Endothelial cell of umbilical vein (primary cell): ENCODE measurements at regions of chr7 and their contacts with region 1.

Region 1: GRCh38 chr7:132145466-132145865 is 430.8 kb downstream of the PLXNA4 start:
- DNase-seq: peak; percentile 88
- H3K4me3 ChIP-seq: no peak overlapping the region
- H3K27ac ChIP-seq: peak overlapping the region; percentile 49
- H3K4me1 ChIP-seq: peaks cover 8% of the 10 kb centered on the region
- H3K27me3 ChIP-seq: no peaks in the 10 kb centered on the region
- CTCF ChIP-seq: peak in 1 of 2 donors; percentile 18
- POLR2A ChIP-seq: no peak

Region 2: GRCh38 chr7:131212114-131212513 is 933.4 kb before region 1 on chr7:
- CTCF ChIA-PET with region 1: no interaction called
- POLR2A ChIA-PET with region 1: no interaction called
- dilution Hi-C with region 1: no loop called
- intact Hi-C with region 1: no loop called
- DNase-seq: peak; percentile 29
- H3K4me3 ChIP-seq: no peak overlapping the region
- H3K27ac ChIP-seq: no peak overlapping the region
- H3K4me1 ChIP-seq: no peaks in the 10 kb centered on the region
- H3K27me3 ChIP-seq: peaks cover 0 to 1% of the 10 kb centered on the region in 2 experiments
- CTCF ChIP-seq: no peak
- POLR2A ChIP-seq: no peak

Region 3: DNA sequence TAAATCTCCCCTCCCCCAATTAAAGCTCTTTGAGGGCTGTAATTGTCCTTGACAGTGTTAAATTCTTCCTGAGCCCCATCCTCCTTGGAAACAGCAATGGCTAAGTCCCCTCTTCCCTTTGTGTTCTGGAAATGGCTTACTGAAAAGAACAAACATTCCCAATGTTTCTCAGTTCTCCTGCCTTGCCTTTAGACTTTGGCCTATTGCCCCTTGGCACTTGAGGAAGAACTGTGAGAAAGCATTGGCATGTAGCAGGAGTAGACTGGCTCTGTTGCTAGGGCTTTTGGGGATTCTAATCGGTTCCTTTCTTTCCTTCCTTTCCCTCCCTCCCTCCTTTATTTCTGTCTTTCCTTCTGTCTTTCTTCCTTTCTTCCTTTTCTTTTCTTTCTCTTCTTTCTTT is 125.8 kb before region 1 on chr7:
- CTCF ChIA-PET with region 1: no interaction called
- POLR2A ChIA-PET with region 1: no interaction called
- dilution Hi-C with region 1: no loop called
- intact Hi-C with region 1: no loop called
- DNase-seq: no peak
- H3K4me3 ChIP-seq: no peak overlapping the region
- H3K27ac ChIP-seq: no peak overlapping the region
- H3K4me1 ChIP-seq: no peaks in the 10 kb centered on the region
- H3K27me3 ChIP-seq: peaks cover 0 to 5% of the 10 kb centered on the region in 2 experiments
- CTCF ChIP-seq: no peak
- POLR2A ChIP-seq: no peak

Region 4: GRCh38 chr7:132065193-132065988 is 80.1 kb before region 1 on chr7:
- CTCF ChIA-PET with region 1: interaction called, 3 read pairs
- POLR2A ChIA-PET with region 1: no interaction called
- dilution Hi-C with region 1: no loop called
- intact Hi-C with region 1: loop called (anchors 5 kb)
- DNase-seq: peak; percentile 83
- H3K4me3 ChIP-seq: no peak overlapping the region
- H3K27ac ChIP-seq: peak overlapping the region; percentile 80
- H3K4me1 ChIP-seq: peaks cover 15% of the 10 kb centered on the region
- H3K27me3 ChIP-seq: no peaks in the 10 kb centered on the region
- CTCF ChIP-seq: no peak
- POLR2A ChIP-seq: no peak

Region 5: GRCh38 chr7:132307465-132307864 is 162.0 kb after region 1 on chr7:
- CTCF ChIA-PET with region 1: no interaction called
- POLR2A ChIA-PET with region 1: no interaction called
- dilution Hi-C with region 1: no loop called
- intact Hi-C with region 1: loop called (anchors 5 kb)
- DNase-seq: peak; percentile 15
- H3K4me3 ChIP-seq: no peak overlapping the region
- H3K27ac ChIP-seq: no peak overlapping the region
- H3K4me1 ChIP-seq: peaks cover 7% of the 10 kb centered on the region
- H3K27me3 ChIP-seq: no peaks in the 10 kb centered on the region
- CTCF ChIP-seq: peak in 1 of 2 donors; percentile 31
- POLR2A ChIP-seq: no peak